ENCODE measurements at regions of chr6 and their contacts with region 1.

Region 1: DNA sequence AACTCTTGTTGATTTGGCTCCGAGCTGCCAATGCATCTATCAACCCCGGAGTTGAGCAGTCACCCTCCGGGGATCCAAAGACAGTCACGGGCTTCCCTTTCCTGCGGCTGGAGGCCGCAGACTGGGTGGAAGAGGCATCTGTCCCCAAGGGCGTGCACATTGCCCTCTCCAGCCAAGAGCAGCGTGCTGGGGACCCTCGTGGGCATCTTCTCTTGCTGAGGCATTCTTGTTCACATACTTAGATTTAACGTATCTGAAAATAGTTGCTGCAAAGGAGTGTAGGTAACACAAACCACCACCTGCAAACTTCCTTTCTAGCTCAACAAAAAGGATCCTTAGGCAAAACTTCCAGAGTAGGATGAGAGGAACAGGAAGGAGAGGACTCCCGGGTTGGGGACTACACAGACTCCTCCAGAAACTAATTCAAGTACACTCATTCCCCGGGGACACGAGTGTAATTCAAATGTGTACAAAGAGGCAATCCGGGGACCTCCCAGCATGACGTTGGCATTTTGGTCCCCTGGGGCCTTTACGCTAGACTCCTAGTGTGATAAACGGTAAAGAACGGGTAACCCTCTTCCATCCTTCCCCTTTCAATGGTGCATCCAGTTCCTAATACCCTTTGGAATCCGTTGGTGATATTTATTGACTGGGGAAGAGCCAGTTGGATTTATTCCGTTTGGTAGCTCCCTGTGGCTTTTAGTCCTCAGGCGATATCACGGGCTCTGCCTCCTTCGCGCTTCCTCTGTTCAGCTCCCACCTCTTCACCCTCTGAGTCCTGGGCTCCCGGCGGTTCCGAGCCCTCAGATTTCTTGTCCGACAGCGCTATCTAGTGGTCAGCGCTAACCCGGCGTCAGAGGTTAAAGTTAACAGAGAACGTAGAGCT is 2.7 kb upstream of the COL12A1 start:
- ATAC-seq: peak; percentile 38 to 79 (median 74)
- H3K4me3 ChIP-seq: no peak overlapping the region
- H3K27ac ChIP-seq: no peak overlapping the region
- H3K4me1 ChIP-seq: peaks cover 4 to 17% of the 10 kb centered on the region in 2 donors

Region 2: GRCh38 chr6:73732845-73733675 is 1475.5 kb before region 1 on chr6:
- in situ Hi-C with region 1: loop called in 5 of 9 experiments (anchors 25 kb)
- ATAC-seq: peak in 6 of 8 experiments; percentile 43 to 87 (median 78)
- H3K4me3 ChIP-seq: no peak overlapping the region
- H3K27ac ChIP-seq: no peak overlapping the region
- H3K4me1 ChIP-seq: no peaks in the 10 kb centered on the region

Region 3: GRCh38 chr6:73747289-73747688 is 1461.3 kb before region 1 on chr6:
- in situ Hi-C with region 1: loop called in 6 of 9 experiments (anchors 10 to 25 kb)
- ATAC-seq: no peak
- H3K4me3 ChIP-seq: no peak overlapping the region
- H3K27ac ChIP-seq: no peak overlapping the region
- H3K4me1 ChIP-seq: no peaks in the 10 kb centered on the region

Region 4: DNA sequence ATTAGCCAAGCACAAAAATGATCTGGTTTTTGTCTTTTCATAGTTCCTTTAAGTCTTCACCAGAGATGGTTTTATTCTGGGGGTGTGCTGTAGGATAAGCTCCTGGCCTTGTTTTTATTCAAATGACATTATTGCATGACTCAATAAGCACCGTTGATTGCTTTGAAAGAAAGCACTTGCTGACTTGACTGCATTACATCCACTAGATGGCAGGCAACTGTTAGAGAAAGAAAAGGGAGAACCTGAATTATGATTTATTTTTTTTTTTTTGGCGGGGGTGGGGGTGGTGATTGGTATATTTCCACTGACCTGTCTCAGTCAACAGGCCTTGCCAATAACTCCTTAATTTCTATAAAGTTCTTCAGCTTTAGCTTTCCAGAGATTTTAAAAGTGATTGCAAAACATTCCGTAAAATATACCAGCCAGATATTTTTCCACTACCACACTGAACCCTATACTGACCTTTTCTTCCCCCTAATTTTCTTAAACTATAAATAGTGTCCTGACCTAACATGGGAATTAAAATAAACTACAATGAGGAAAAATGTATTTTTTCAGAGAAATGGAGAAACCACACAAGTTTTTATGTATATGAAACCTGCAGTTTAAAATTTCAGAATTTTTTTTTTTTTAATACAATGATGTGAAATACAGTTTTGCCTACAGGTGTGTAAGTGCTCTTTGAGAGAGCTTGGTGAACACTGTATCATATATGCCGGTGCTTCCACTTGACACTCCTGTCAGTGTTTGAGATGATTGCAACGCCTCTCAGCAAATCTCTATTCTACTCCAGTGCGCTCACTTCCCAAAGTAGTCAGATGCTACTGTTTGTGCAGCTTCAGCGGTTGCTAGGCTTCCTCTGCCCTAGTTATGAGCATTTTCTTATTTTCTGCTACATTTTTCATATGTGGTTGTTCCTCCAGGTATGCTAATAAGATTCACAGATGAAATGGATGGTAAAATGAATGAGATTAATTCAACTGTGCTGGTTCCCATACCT is 1238.3 kb before region 1 on chr6:
- in situ Hi-C with region 1: loop called in 5 of 9 experiments (anchors 10 to 25 kb)
- ATAC-seq: peak in 5 of 8 experiments; percentile 51 to 70 (median 62)
- H3K4me3 ChIP-seq: no peak overlapping the region
- H3K27ac ChIP-seq: no peak overlapping the region
- H3K4me1 ChIP-seq: peaks cover 0 to 8% of the 10 kb centered on the region in 2 donors

Region 5: DNA sequence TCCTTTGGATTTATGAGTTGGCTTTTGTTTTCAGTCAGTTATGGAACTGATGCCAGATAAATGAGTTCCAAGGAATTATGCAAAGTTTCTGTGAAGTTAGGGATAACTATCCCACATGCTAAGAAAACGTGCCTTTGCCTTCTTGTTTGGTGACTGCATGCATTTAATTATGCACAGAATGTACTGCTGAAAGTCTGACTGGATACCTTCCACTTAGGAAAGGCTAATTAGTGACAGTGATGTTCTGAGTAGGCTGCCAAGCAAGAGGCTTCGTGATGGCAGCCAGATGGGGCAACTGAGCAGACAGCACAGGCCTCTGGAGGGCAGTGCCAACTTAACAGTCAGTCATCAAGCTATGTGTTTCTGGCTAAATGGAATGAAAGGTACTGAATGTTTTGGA is 1222.7 kb before region 1 on chr6:
- in situ Hi-C with region 1: loop called in 3 of 9 experiments (anchors 25 kb)
- ATAC-seq: peak in 3 of 8 experiments; percentile 65 to 93 (median 90)
- H3K4me3 ChIP-seq: no peak overlapping the region
- H3K27ac ChIP-seq: no peak overlapping the region
- H3K4me1 ChIP-seq: no peaks in the 10 kb centered on the region

Region 6: DNA sequence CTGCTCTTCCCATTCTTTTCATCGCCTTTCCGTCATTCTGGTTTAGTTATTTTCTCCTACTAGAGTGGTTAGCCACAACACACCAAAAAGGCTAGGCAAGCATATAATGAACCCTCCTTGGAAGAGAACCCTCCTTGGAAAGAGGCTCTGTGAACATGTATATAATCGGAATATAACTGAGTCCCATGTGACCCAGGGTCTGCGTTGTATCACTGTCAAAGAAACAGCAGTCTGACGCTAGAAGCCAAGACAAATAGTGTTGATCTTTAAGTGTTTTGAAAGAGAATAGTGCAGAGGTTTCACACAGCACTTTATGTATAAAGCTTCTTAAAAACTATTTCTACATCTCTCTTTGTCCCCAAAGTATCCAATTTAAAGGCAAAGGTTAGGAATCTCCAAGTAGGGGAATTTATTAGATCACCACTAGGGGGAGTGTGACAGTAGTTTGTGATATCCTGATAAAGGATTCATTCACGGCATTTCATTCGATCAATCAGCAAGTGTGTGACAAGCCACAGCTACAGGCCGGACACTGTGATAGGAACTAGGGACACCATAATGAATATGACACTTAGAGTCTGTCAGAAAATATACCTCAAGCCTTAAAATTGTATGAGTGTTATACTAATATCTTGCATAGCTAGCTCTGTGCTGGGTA is 1117.3 kb before region 1 on chr6:
- in situ Hi-C with region 1: loop called in 4 of 9 experiments (anchors 25 kb)
- ATAC-seq: peak; percentile 51 to 72 (median 58)
- H3K4me3 ChIP-seq: no peak overlapping the region
- H3K27ac ChIP-seq: no peak overlapping the region
- H3K4me1 ChIP-seq: no peaks in the 10 kb centered on the region

Region 7: GRCh38 chr6:74409447-74409846 is 799.1 kb before region 1 on chr6:
- in situ Hi-C with region 1: loop called in 2 of 9 experiments (anchors 10 to 25 kb)
- ATAC-seq: peak in 7 of 8 experiments; percentile 42 to 86 (median 64)
- H3K4me3 ChIP-seq: no peak overlapping the region
- H3K27ac ChIP-seq: no peak overlapping the region
- H3K4me1 ChIP-seq: no peaks in the 10 kb centered on the region

Region 8: GRCh38 chr6:75786152-75786551 is 577.6 kb after region 1 on chr6:
- in situ Hi-C with region 1: no loop called
- ATAC-seq: peak in 3 of 8 experiments; percentile 47 to 81 (median 76)
- H3K4me3 ChIP-seq: no peak overlapping the region
- H3K27ac ChIP-seq: no peak overlapping the region
- H3K4me1 ChIP-seq: no peaks in the 10 kb centered on the region